ENCODE measurements at regions of chr7 and their contacts with region 1.

Region 1: DNA sequence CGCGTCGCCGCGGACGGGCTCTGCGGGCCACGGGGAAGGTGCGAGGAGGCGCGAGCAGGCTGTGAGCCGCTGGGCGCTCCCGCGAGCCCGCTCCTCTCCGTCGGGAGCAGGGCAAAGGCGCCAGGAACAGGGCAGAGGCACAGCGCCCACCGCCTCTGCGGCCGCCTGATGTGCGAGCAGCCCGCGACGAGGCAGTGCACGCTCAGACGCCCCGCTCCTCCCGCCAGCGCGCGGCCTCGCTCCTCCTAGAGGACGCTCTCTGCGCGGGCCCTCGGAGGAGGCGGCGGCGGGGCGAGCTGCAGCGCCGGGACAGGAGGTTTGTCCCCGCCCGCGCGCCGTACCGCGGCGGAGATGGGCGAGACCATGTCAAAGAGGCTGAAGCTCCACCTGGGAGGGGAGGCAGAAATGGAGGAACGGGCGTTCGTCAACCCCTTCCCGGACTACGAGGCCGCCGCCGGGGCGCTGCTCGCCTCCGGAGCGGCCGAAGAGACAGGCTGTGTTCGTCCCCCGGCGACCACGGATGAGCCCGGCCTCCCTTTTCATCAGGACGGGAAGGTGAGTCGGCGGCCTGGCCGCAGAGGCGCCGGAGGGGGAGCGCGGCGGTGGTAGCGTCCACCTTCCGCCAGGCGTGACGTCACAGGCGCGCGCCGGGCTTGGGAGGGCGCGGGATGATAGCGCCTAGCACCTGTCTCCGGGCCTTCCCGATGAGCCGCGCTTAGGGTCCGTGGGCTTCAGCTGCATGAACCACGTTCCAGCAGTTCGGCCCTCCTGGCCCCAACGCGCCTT is 731 bp downstream of the LANCL2 start:
- DNase-seq: peak; percentile 99
- ATAC-seq: peak; percentile 86
- H3K4me3 Mint-ChIP-seq: peak overlapping the region; percentile 94
- H3K27ac Mint-ChIP-seq: peak overlapping the region; percentile 96
- H3K4me1 Mint-ChIP-seq: peaks cover 24% of the 10 kb centered on the region
- H3K27me3 Mint-ChIP-seq: no peaks in the 10 kb centered on the region
- CTCF ChIP-seq: no peak

Region 2: DNA sequence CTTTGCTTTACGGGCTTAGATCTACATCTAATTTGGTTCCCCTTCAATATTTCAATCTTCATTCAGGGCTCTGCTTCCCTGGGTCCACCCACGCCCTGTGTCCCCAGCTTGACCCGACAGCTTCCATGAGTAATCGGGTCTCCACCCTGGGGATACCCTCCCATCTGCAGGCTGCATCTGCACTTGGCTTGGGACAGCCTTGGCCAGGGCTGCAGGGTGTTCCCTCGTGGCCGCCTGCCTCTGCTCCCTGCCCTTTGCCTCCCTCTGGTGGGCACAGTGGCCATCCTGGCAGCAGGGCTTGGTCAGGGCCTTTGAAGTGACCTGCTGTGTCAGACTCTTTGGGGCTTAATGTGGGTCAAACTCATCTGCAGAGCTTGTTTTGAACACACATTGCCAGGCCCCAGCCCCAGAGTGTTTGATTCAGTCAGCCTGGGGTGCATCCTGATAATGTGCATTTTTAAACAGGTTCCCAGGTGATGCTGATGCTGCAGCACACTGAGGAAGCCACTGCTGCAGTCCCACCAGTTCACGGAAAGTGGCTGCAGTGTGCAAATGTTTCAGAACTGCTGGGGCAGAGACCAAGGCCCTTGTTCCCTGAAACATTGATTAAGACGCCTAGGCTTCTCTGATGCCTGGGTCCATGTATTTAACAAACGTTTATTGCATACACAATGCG is 526.2 kb before region 1 on chr7:
- CTCF ChIA-PET with region 1: no interaction called
- POLR2A ChIA-PET with region 1: no interaction called
- intact Hi-C with region 1: no loop called
- DNase-seq: no peak
- ATAC-seq: no peak
- H3K4me3 Mint-ChIP-seq: no peak overlapping the region
- H3K27ac Mint-ChIP-seq: no peak overlapping the region
- H3K4me1 Mint-ChIP-seq: no peaks in the 10 kb centered on the region
- H3K27me3 Mint-ChIP-seq: peaks cover 3% of the 10 kb centered on the region
- CTCF ChIP-seq: no peak

Region 3: GRCh38 chr7:55132890-55133551 is 232.8 kb before region 1 on chr7:
- CTCF ChIA-PET with region 1: no interaction called
- POLR2A ChIA-PET with region 1: no interaction called
- intact Hi-C with region 1: no loop called
- DNase-seq: no peak
- ATAC-seq: peak; percentile 18
- H3K4me3 Mint-ChIP-seq: no peak overlapping the region
- H3K27ac Mint-ChIP-seq: no peak overlapping the region
- H3K4me1 Mint-ChIP-seq: peaks cover 2% of the 10 kb centered on the region
- H3K27me3 Mint-ChIP-seq: peaks cover 14% of the 10 kb centered on the region
- CTCF ChIP-seq: no peak

Region 4: GRCh38 chr7:55255496-55256435 is 110.1 kb before region 1 on chr7:
- CTCF ChIA-PET with region 1: no interaction called
- POLR2A ChIA-PET with region 1: interaction called, 5 read pairs
- intact Hi-C with region 1: loop called (anchors 1 kb)
- DNase-seq: peak; percentile 70
- ATAC-seq: peak; percentile 93
- H3K4me3 Mint-ChIP-seq: peak overlapping the region; percentile 88
- H3K27ac Mint-ChIP-seq: no peak overlapping the region
- H3K4me1 Mint-ChIP-seq: peaks cover 16% of the 10 kb centered on the region
- H3K27me3 Mint-ChIP-seq: peaks cover 50% of the 10 kb centered on the region
- CTCF ChIP-seq: no peak

Region 5: DNA sequence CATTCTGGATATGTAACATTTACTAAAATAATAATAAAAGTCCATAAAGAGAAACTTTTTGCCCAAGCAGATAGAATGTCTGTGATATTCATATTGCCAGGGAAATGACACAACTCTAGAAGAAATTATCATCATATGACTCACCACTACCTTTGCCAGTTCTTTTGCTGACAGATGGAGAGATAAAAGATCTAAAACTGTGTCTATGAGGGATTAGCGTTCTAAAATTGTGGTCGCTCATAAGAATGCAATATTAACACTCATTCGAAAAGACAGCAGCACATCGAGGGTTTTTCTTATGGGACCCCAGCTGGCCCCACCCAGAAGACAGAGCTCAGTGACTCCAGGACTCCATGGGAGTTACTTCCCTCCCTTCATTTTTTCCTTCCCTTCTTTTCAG is 17.4 kb before region 1 on chr7:
- CTCF ChIA-PET with region 1: no interaction called
- POLR2A ChIA-PET with region 1: no interaction called
- intact Hi-C with region 1: no loop called
- DNase-seq: no peak
- ATAC-seq: no peak
- H3K4me3 Mint-ChIP-seq: no peak overlapping the region
- H3K27ac Mint-ChIP-seq: no peak overlapping the region
- H3K4me1 Mint-ChIP-seq: no peaks in the 10 kb centered on the region
- H3K27me3 Mint-ChIP-seq: peaks cover 26% of the 10 kb centered on the region
- CTCF ChIP-seq: no peak

Region 6: DNA sequence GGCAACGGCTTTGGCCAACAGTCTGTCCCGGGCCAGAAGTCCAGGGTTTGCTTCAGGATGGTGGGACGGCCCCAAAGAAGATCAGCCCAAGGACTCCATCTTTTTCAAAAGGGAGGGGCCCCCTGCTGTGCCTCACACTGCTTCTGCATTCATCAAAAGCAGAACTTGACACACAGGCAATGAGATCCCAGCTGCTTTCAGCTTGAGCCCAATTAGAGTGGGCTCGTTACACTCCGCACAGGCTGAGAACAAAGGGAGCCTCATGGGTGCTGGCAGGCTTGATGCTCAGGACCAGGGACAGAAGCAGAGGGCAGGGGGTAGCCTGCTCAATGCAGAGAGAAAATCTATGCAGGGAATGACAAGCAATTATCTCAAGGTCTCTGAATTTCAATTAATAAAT is 160.9 kb after region 1 on chr7:
- CTCF ChIA-PET with region 1: no interaction called
- POLR2A ChIA-PET with region 1: interaction called, 10 read pairs
- intact Hi-C with region 1: no loop called
- DNase-seq: no peak
- ATAC-seq: peak; percentile 91
- H3K4me3 Mint-ChIP-seq: peak overlapping the region; percentile 74
- H3K27ac Mint-ChIP-seq: peak overlapping the region; percentile 92
- H3K4me1 Mint-ChIP-seq: peaks cover 91% of the 10 kb centered on the region
- H3K27me3 Mint-ChIP-seq: no peaks in the 10 kb centered on the region
- CTCF ChIP-seq: no peak

Region 7: DNA sequence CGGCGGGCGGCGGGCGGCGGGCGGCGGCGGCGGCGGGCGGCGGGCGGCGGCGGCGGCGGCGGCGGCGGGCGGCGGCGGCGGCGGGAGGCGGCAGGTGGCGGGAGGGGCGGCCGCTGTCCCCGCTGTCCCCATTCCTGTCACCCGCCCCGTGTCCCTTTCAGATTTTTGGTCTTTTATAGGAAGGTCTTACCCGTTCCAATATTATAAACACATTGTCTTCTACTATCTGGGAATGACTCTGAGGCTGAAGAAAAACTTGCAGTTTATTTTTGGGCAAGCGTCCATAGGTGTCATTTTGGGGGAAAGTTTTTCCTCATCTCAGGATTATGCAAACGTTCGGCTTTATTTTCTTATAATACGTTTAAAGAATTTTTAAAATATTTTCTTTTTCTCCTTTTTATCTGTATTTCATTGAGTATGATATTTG is 522.0 kb after region 1 on chr7:
- CTCF ChIA-PET with region 1: no interaction called
- POLR2A ChIA-PET with region 1: no interaction called
- intact Hi-C with region 1: loop called (anchors 2 kb)
- DNase-seq: no peak
- ATAC-seq: no peak
- H3K4me3 Mint-ChIP-seq: peak overlapping the region; percentile 78
- H3K27ac Mint-ChIP-seq: peak overlapping the region; percentile 60
- H3K4me1 Mint-ChIP-seq: peaks cover 4% of the 10 kb centered on the region
- H3K27me3 Mint-ChIP-seq: no peaks in the 10 kb centered on the region
- CTCF ChIP-seq: no peak

Region 8: DNA sequence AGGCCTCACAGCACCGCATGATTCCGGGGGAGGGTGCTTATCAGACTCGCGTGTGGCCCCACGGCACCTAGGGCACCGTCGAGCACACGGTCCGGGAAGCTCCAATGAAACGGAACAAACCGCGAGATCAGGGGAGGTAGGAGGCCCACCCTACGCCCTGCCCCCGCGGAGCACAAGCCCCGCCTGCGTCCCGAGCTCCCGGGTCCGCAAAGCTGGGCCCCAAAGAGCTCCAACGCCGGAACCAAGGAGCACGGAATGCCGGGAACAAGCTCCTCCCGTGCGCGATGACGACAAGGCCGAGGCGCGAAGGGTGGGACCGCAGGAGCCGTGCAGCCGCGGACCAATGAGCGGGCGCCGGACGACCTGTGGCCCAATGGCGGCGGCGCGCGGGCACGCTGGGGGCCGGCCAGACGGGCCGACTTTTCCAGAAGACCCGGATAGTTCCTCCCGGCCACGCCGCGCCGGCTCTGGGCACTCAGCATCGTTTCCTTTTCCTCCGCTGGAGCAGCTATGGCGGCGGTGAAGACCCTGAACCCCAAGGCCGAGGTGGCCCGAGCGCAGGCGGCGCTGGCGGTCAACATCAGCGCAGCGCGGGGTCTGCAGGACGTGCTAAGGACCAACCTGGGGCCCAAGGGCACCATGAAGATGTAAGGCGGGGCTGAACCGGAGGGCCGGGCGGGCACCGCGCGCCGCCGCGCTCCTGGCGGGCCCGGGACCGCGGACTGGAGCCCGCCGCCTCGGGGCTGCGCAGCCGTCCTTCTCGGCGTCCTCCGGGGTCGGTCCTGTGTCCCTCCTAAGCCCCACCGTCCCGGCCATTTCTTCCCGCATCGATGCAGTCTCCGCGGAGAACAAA is 685.7 kb after region 1 on chr7 and contains the starts of genes CCT6A and PSPH:
- CTCF ChIA-PET with region 1: no interaction called
- POLR2A ChIA-PET with region 1: interaction called, 14 read pairs
- intact Hi-C with region 1: loop called (anchors 1 kb)
- DNase-seq: peak; percentile 88
- ATAC-seq: peak; percentile 90
- H3K4me3 Mint-ChIP-seq: peak within 1 kb of the TSS; percentile 88
- H3K27ac Mint-ChIP-seq: peak within 1 kb of the TSS; percentile 88
- H3K4me1 Mint-ChIP-seq: peaks cover 27% of the 10 kb centered on the region
- H3K27me3 Mint-ChIP-seq: no peaks in the 10 kb centered on the region
- CTCF ChIP-seq: no peak
- total RNA-seq, gene CCT6A: 149 and 158 TPM in 2 replicates
- total RNA-seq, gene PSPH: 7.9 and 9.0 TPM in 2 replicates